ENCODE measurements at regions of chr14 and their contacts with region 1.

Region 1: DNA sequence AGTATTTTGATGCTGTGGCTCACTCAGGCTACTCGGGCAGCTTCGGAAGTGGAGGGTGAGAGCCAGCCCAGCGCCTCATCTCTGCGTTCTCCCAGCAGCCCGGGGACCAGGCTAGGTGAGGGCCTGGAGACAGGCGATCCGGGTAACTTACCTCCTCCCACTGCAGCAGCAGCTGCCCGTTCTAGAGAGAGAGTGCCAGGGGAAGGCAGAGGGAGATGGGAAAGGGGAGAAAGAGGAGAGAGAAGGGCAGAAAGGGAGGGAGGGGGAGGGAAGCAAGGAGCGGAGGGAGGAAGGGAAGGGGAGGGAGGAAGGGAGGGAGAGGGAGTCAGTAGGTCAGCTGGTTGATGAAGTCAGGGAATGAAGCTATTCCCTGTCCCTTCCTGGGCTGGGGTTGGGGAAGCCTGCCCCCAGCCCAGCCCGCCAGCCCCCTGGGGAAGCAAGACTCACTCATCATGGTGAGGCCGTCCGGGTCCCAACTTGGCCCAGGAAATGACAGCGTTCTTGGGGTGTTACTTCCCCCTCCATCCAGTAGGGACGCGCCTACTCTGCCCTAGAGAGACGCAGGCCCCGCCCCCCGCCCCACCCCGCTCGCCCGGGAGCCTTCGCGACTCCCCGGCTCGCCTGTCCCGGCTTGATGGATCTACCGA is at the start of gene IFI27L2:
- DNase-seq: no peak
- ATAC-seq: peak; percentile 98
- H3K4me3 ChIP-seq: peak within 1 kb of the TSS; percentile 99
- H3K27ac ChIP-seq: peak within 1 kb of the TSS; percentile 67
- H3K4me1 ChIP-seq: peaks cover 10% of the 10 kb centered on the region; the same call in 1 of the 2 replicates
- H3K27me3 ChIP-seq: peaks cover 0 to 4% of the 10 kb centered on the region in 2 experiments; a peak in 1 of 4 replicates
- CTCF ChIP-seq: peak; percentile 4 to 46 (median 11); a peak in 1 of 6 replicates
- EP300 ChIP-seq: no peak
- POLR2A ChIP-seq: peak; percentile 82
- RAD21 ChIP-seq: no peak
- polyA plus RNA-seq, gene IFI27L2: 26.6 to 61.2 TPM

Region 2: DNA sequence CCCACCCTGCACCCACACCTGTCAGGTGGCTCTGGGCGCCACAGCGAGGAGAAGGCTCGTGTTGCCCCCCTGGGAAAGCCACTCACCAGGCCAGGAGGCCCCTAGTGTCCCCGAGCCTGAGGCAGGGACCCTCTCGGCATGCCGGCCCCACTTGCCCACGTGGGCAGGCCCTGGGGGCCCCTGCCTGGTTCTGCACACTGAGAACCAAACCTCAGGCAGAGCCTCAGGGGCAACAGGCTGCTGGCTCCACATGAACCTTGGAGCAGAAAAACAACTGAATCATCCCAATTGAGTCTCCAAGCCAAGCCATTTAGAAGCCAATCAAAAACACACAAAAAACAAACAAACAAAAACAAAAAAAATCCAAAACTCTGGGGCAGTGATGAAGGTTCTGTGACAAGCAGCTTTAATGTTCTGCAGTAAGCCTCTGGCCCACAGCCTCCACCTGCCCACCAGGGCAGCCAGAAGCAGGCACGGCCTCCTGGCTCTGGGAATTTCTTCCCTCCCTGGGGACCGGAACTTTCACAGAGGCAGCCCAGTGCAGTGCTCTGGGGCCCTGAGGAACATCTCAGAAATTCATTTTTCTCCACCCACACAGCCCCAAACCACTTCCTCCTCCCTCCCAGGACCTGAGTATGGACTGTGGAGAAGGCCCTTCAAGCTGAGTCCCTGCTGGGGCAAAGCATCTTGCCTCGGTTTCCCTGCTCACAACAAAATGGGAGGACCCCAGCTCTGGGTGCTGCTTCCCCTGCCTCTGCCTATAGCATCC is 1116.1 kb before region 1 on chr14:
- CTCF ChIA-PET with region 1: no interaction called
- POLR2A ChIA-PET with region 1: no interaction called
- RAD21 ChIA-PET with region 1: no interaction called
- SMC1A ChIA-PET with region 1: no interaction called
- in situ Hi-C with region 1: no loop called
- intact Hi-C with region 1: no loop called
- DNase-seq: no peak
- ATAC-seq: peak; percentile 76
- H3K4me3 ChIP-seq: no peak overlapping the region
- H3K27ac ChIP-seq: peak overlapping the region; percentile 41
- H3K4me1 ChIP-seq: peaks cover 17% of the 10 kb centered on the region
- H3K27me3 ChIP-seq: no peaks in the 10 kb centered on the region
- CTCF ChIP-seq: no peak
- EP300 ChIP-seq: no peak
- POLR2A ChIP-seq: no peak
- RAD21 ChIP-seq: no peak

Region 3: DNA sequence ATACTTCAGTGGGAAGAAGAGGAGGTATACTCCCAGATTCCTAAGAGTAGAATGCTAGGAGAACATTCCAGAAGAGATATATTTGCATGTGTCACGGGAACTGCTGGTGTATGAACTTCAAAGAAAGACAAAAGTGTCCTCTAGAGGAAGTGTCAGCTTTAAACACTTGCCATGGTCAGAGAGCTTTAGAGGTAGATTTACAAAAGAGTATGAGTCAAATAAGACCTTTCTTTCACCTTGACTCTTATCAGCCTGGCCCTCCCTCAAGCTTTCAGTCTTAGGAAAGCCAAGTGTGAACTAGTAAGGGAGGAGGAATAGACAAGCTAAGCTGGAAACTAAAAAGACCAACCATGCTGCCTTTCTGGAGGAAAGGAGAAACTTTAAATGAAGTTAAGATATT is 747.6 kb before region 1 on chr14:
- CTCF ChIA-PET with region 1: no interaction called
- POLR2A ChIA-PET with region 1: no interaction called
- RAD21 ChIA-PET with region 1: no interaction called
- SMC1A ChIA-PET with region 1: no interaction called
- in situ Hi-C with region 1: no loop called
- intact Hi-C with region 1: no loop called
- DNase-seq: no peak
- ATAC-seq: peak; percentile 76
- H3K4me3 ChIP-seq: no peak overlapping the region
- H3K27ac ChIP-seq: no peak overlapping the region
- H3K4me1 ChIP-seq: no peaks in the 10 kb centered on the region
- H3K27me3 ChIP-seq: no peaks in the 10 kb centered on the region
- CTCF ChIP-seq: 0 out of 6 replicates have a peak, but pooled peaks of 1 of the 3 experiments have one; percentile 13
- EP300 ChIP-seq: no peak
- POLR2A ChIP-seq: no peak
- RAD21 ChIP-seq: peak; percentile 54

Region 4: DNA sequence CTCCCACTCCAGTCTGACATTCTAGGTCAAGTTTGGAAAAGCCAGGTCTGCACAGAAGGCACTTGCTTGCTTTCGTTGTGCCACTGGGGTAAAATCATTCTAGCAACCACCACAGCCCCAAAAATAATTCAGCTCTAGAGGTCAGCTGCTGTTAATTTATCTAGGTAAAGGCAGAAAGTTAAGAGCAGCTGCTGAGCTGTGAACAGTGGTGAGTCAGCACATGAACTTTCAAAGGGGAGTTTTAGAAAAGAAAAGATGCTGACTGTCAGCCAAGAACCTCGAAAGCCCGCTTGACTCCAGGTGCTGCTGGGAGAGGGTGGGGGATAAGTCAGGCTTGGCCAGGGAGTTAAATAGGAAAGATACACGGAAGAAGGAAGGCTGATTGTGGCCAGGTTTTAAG is 119.5 kb before region 1 on chr14:
- CTCF ChIA-PET with region 1: interaction called, 10 read pairs
- POLR2A ChIA-PET with region 1: no interaction called
- RAD21 ChIA-PET with region 1: interaction called, 4 read pairs
- SMC1A ChIA-PET with region 1: interaction called, 4 read pairs
- in situ Hi-C with region 1: no loop called
- intact Hi-C with region 1: no loop called
- DNase-seq: peak; percentile 25
- ATAC-seq: peak; percentile 86
- H3K4me3 ChIP-seq: no peak overlapping the region; the same call in 1 of the 2 replicates
- H3K27ac ChIP-seq: peak overlapping the region; percentile 20; the same call in 1 of the 2 replicates
- H3K4me1 ChIP-seq: peaks cover 36% of the 10 kb centered on the region
- H3K27me3 ChIP-seq: no peaks in the 10 kb centered on the region
- CTCF ChIP-seq: no peak
- EP300 ChIP-seq: peak; percentile 10 to 57; a peak in 1 of 4 replicates
- POLR2A ChIP-seq: no peak
- RAD21 ChIP-seq: no peak

Region 5: GRCh38 chr14:94056579-94057308 is 72.5 kb before region 1 on chr14:
- CTCF ChIA-PET with region 1: interaction called, 17 read pairs
- POLR2A ChIA-PET with region 1: no interaction called
- RAD21 ChIA-PET with region 1: no interaction called
- SMC1A ChIA-PET with region 1: interaction called, 5 read pairs
- in situ Hi-C with region 1: no loop called
- intact Hi-C with region 1: no loop called
- DNase-seq: peak; percentile 37
- ATAC-seq: peak; percentile 81
- H3K4me3 ChIP-seq: no peak overlapping the region
- H3K27ac ChIP-seq: peak overlapping the region; percentile 43; the same call in 1 of the 2 replicates
- H3K4me1 ChIP-seq: peaks cover 26% of the 10 kb centered on the region
- H3K27me3 ChIP-seq: no peaks in the 10 kb centered on the region
- CTCF ChIP-seq: no peak
- EP300 ChIP-seq: 0 out of 4 replicates have a peak, but pooled peaks of 1 of the 2 experiments have one; percentile 22
- POLR2A ChIP-seq: no peak
- RAD21 ChIP-seq: no peak

Region 6: DNA sequence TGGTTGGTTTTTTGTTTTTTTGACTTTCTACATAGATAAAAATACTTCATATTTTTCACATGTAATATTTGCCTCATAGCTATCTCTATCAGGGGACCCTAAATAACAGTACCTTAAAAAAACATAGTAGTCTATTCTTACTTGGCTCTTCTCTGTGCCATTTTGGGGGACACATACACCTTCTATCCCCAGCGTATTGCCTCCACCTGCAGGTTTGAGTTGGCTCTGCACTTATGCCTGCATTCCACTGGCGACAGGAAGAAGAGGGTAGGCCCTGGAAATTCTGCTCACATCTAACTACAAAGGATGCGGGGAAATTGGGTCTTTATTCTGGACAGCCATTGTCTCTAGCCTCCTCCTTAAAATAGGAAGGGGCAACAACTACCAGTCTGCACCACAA is 14.0 kb after region 1 on chr14:
- CTCF ChIA-PET with region 1: interaction called, 34 read pairs
- POLR2A ChIA-PET with region 1: no interaction called
- RAD21 ChIA-PET with region 1: interaction called, 5 read pairs
- SMC1A ChIA-PET with region 1: interaction called, 5 read pairs
- in situ Hi-C with region 1: no loop called
- intact Hi-C with region 1: no loop called
- DNase-seq: no peak
- ATAC-seq: peak; percentile 83
- H3K4me3 ChIP-seq: no peak overlapping the region
- H3K27ac ChIP-seq: no peak overlapping the region
- H3K4me1 ChIP-seq: peaks cover 5% of the 10 kb centered on the region
- H3K27me3 ChIP-seq: no peaks in the 10 kb centered on the region
- CTCF ChIP-seq: peak; percentile 37 to 49 (median 41); a peak in 5 of 6 replicates
- EP300 ChIP-seq: no peak
- POLR2A ChIP-seq: no peak
- RAD21 ChIP-seq: peak; percentile 33

Region 7: GRCh38 chr14:94548999-94549985 is 420.1 kb after region 1 on chr14:
- CTCF ChIA-PET with region 1: no interaction called
- POLR2A ChIA-PET with region 1: no interaction called
- RAD21 ChIA-PET with region 1: interaction called, 3 read pairs
- SMC1A ChIA-PET with region 1: no interaction called
- in situ Hi-C with region 1: no loop called
- intact Hi-C with region 1: loop called (anchors 1 kb)
- DNase-seq: no peak
- ATAC-seq: peak; percentile 93
- H3K4me3 ChIP-seq: no peak overlapping the region
- H3K27ac ChIP-seq: no peak overlapping the region
- H3K4me1 ChIP-seq: no peaks in the 10 kb centered on the region
- H3K27me3 ChIP-seq: peaks cover 0 to 8% of the 10 kb centered on the region in 2 experiments; a peak in 1 of 4 replicates
- CTCF ChIP-seq: peak; percentile 78 to 86 (median 86)
- EP300 ChIP-seq: no peak
- POLR2A ChIP-seq: no peak
- RAD21 ChIP-seq: peak; percentile 61

Measured in GM12878 (cell line).